ENCODE measurements at regions of chr2 and their contacts with region 1.

Region 1: GRCh38 chr2:233353769-233354499 is at the start of gene DGKD:
- DNase-seq: peak; percentile 38 to 65
- H3K4me3 ChIP-seq: peak within 1 kb of the TSS; percentile 31 to 69
- H3K27ac ChIP-seq: peak within 1 kb of the TSS; percentile 45 to 58
- H3K4me1 ChIP-seq: peaks cover 6 to 7% of the 10 kb centered on the region in 2 donors
- H3K27me3 ChIP-seq: no peaks in the 10 kb centered on the region
- CTCF ChIP-seq: peak in 2 of 4 experiments; percentile 34 to 78
- POLR2A ChIP-seq: no peak
- total RNA-seq, gene DGKD: 5.0 to 46.1 (median 28.0) TPM

Region 2: DNA sequence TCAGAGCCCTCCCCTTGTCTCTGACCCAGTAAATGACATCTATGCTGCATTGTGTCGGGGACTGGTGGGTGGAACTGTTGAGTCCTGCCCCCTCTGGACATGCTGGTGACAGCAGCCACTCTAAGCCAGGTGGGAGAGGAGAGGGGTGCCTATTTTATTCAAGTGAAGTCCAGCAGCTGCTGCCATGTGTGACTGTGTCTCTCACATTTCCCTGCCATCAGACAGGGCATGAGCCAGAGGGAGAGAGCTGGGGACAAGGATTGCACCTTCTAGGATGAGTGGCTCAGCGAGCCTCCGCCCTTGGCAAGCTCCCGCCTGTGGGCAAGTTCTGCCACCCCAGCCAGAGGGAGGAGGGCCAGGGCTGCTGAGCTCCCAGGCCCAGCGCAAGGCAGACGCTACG is 354.6 kb before region 1 on chr2:
- intact Hi-C with region 1: no loop called
- DNase-seq: no peak
- H3K4me3 ChIP-seq: no peak overlapping the region
- H3K27ac ChIP-seq: no peak overlapping the region
- H3K4me1 ChIP-seq: no peaks in the 10 kb centered on the region
- H3K27me3 ChIP-seq: no peaks in the 10 kb centered on the region
- CTCF ChIP-seq: no peak
- POLR2A ChIP-seq: no peak

Region 3: DNA sequence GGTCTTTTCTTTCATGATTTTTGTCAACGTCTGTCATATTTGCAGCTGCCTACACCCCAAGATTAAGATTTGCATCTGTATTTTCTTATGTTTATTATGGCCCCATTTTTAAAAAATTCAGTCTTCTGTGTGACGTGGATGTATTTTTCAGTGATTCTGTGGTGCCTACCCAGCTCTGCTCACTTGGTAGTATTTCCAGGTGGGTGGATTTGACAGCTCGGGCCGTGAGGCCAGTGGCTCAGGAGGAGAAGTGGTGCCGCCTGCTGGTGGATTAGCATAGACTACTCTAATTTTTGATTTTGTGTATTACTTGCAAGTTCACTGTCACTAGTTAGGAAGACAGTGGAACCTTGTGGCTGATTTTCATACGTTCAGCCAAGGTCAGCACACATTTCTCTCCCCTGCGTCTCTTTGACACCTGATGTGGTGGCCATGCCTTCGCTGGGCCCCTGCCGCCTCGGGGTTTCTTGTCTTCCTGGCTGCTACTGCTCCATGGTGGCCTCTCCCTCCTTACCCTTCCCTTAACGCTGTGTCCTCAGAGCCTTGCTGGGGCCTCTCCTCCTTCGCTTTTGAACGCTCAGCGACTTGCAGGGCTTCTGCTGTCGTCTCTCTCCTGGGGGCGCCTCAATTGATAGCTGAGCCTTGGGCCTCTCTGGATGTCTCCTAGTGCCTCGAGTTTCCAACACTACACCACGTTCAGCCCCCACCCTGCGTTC is 89.7 kb after region 1 on chr2:
- intact Hi-C with region 1: loop called (anchors 5 kb)
- DNase-seq: peak; percentile 76 to 80
- H3K4me3 ChIP-seq: no peak overlapping the region
- H3K27ac ChIP-seq: peak overlapping the region in 1 of 2 donors; percentile 10
- H3K4me1 ChIP-seq: no peaks in the 10 kb centered on the region
- H3K27me3 ChIP-seq: no peaks in the 10 kb centered on the region
- CTCF ChIP-seq: peak; percentile 73 to 86 (median 75)
- POLR2A ChIP-seq: no peak